ENCODE measurements at regions of chr20 and their contacts with region 1.

Region 1: GRCh38 chr20:14337400-14338171 is at the start of gene FLRT3:
- DNase-seq: peak; percentile 45 to 88 (median 64)
- H3K4me3 ChIP-seq: peak within 1 kb of the TSS in 5 of 7 experiments; percentile 54 to 75 (median 65)
- H3K27ac ChIP-seq: no peak within 1 kb of the TSS
- H3K4me1 ChIP-seq: peaks cover 0 to 4% (median 2%) of the 10 kb centered on the region in 4 experiments
- H3K27me3 ChIP-seq: peaks cover 0 to 8% (median 0%) of the 10 kb centered on the region in 5 experiments

Region 2: GRCh38 chr20:15236812-15237211 is 899.2 kb after region 1 on chr20:
- CTCF ChIA-PET with region 1: interaction called, 30 read pairs
- POLR2A ChIA-PET with region 1: no interaction called
- DNase-seq: peak in 2 of 3 donors; percentile 1 to 64
- H3K4me3 ChIP-seq: no peak overlapping the region
- H3K27ac ChIP-seq: no peak overlapping the region
- H3K4me1 ChIP-seq: no peaks in the 10 kb centered on the region
- H3K27me3 ChIP-seq: no peaks in the 10 kb centered on the region